CD4-positive, alpha-beta T cell (primary cell): ENCODE measurements at regions of chr5 and their contacts with region 1.

Region 1: GRCh38 chr5:159444441-159445082 is 114.3 kb upstream of the IL12B start:
- DNase-seq: peak in 3 of 14 experiments; percentile 53 to 65 (median 55)
- ATAC-seq: no peak
- H3K4me3 ChIP-seq: no peak overlapping the region
- H3K4me3 Mint-ChIP-seq: no peak overlapping the region
- H3K27ac ChIP-seq: no peak overlapping the region
- H3K27ac Mint-ChIP-seq: no peak overlapping the region
- H3K4me1 ChIP-seq: no peaks in the 10 kb centered on the region
- H3K4me1 Mint-ChIP-seq: no peaks in the 10 kb centered on the region
- H3K27me3 ChIP-seq: no peaks in the 10 kb centered on the region
- H3K27me3 Mint-ChIP-seq: no peaks in the 10 kb centered on the region
- CTCF ChIP-seq: peak; percentile 32

Region 2: GRCh38 chr5:160199410-160199911 is 754.9 kb after region 1 on chr5:
- CTCF ChIA-PET with region 1: no interaction called
- POLR2A ChIA-PET with region 1: no interaction called
- intact Hi-C with region 1: loop called in 1 of 2 experiments (anchors 5 kb)
- DNase-seq: peak; percentile 45 to 82 (median 63)
- ATAC-seq: peak; percentile 97
- H3K4me3 ChIP-seq: peak overlapping the region; percentile 51
- H3K4me3 Mint-ChIP-seq: peak overlapping the region; percentile 78
- H3K27ac ChIP-seq: no peak overlapping the region
- H3K27ac Mint-ChIP-seq: no peak overlapping the region
- H3K4me1 ChIP-seq: peaks cover 11% of the 10 kb centered on the region
- H3K4me1 Mint-ChIP-seq: no peaks in the 10 kb centered on the region
- H3K27me3 ChIP-seq: peaks cover 0 to 5% of the 10 kb centered on the region in 2 experiments
- H3K27me3 Mint-ChIP-seq: peaks cover 21% of the 10 kb centered on the region
- CTCF ChIP-seq: peak; percentile 82